Adrenal gland (tissue), 19 donors: ENCODE measurements at regions of chr12 and their contacts with region 1.

Region 1: GRCh38 chr12:49511410-49511809 is 27.4 kb upstream of the KCNH3 start:
- DNase-seq: no peak
- H3K4me3 ChIP-seq: no peak overlapping the region
- H3K27ac ChIP-seq: no peak overlapping the region
- H3K4me1 ChIP-seq: no peaks in the 10 kb centered on the region
- H3K27me3 ChIP-seq: no peaks in the 10 kb centered on the region
- CTCF ChIP-seq: no peak
- POLR2A ChIP-seq: no peak

Region 2: DNA sequence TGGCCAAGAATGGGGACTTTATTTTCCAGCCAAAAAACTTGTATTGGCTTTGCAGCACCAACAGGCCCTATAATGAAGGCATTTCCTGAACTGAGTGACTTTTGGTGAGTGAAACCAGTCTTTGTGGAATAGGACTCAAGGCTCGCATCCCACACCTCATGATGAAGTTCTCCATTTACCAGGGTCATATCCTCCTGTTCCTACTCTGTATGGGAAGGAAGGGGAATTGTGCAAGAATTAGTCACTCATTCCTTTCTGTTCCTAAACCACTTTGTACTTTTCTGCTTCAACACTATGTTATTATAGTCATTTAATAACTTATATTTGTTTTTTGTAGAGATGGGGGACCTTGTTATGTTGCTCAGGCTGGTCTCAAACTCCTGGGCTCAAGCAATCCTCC is 146.4 kb before region 1 on chr12:
- intact Hi-C with region 1: loop called (anchors 5 kb)
- DNase-seq: peak in 2 of 7 donors; percentile 31 to 49
- H3K4me3 ChIP-seq: no peak overlapping the region
- H3K27ac ChIP-seq: peak overlapping the region in 1 of 5 donors; percentile 42
- H3K4me1 ChIP-seq: peaks cover 15 to 35% of the 10 kb centered on the region in 2 donors
- H3K27me3 ChIP-seq: no peaks in the 10 kb centered on the region
- CTCF ChIP-seq: no peak
- POLR2A ChIP-seq: no peak